ENCODE measurements at regions of chr2 and their contacts with region 1.

Region 1: GRCh38 chr2:230326453-230327417 is at the start of gene SP140L:
- DNase-seq: peak; percentile 86
- H3K4me3 Mint-ChIP-seq: peak within 1 kb of the TSS; percentile 89
- H3K27ac Mint-ChIP-seq: peak within 1 kb of the TSS; percentile 90
- H3K4me1 Mint-ChIP-seq: peaks cover 70% of the 10 kb centered on the region
- H3K27me3 Mint-ChIP-seq: no peaks in the 10 kb centered on the region
- total RNA-seq, gene SP140L: 85.2 to 88.0 TPM

Region 2: GRCh38 chr2:230219419-230220331 is 107.1 kb before region 1 on chr2 and contains the start of gene SP110:
- CTCF ChIA-PET with region 1: interaction called, 4 read pairs
- POLR2A ChIA-PET with region 1: interaction called, 49 read pairs
- DNase-seq: peak; percentile 88
- H3K4me3 Mint-ChIP-seq: peak within 1 kb of the TSS; percentile 94
- H3K27ac Mint-ChIP-seq: peak within 1 kb of the TSS; percentile 91
- H3K4me1 Mint-ChIP-seq: peaks cover 75% of the 10 kb centered on the region
- H3K27me3 Mint-ChIP-seq: no peaks in the 10 kb centered on the region
- total RNA-seq, gene SP110: 125 to 128 TPM

Region 3: GRCh38 chr2:230225486-230225885 is 101.2 kb before region 1 on chr2 and contains the start of gene SP140:
- CTCF ChIA-PET with region 1: interaction called, 5 read pairs
- POLR2A ChIA-PET with region 1: interaction called, 49 read pairs
- DNase-seq: peak; percentile 88
- H3K4me3 Mint-ChIP-seq: peak within 1 kb of the TSS; percentile 77
- H3K27ac Mint-ChIP-seq: peak within 1 kb of the TSS; percentile 94
- H3K4me1 Mint-ChIP-seq: peaks cover 64% of the 10 kb centered on the region
- H3K27me3 Mint-ChIP-seq: no peaks in the 10 kb centered on the region
- total RNA-seq, gene SP140: 132 to 137 TPM

Region 4: GRCh38 chr2:230347659-230348305 is 21.0 kb after region 1 on chr2:
- CTCF ChIA-PET with region 1: interaction called, 5 read pairs
- POLR2A ChIA-PET with region 1: interaction called, 35 read pairs
- DNase-seq: peak; percentile 63
- H3K4me3 Mint-ChIP-seq: peak overlapping the region; percentile 63
- H3K27ac Mint-ChIP-seq: peak overlapping the region; percentile 92
- H3K4me1 Mint-ChIP-seq: peaks cover 72% of the 10 kb centered on the region
- H3K27me3 Mint-ChIP-seq: no peaks in the 10 kb centered on the region

Region 5: DNA sequence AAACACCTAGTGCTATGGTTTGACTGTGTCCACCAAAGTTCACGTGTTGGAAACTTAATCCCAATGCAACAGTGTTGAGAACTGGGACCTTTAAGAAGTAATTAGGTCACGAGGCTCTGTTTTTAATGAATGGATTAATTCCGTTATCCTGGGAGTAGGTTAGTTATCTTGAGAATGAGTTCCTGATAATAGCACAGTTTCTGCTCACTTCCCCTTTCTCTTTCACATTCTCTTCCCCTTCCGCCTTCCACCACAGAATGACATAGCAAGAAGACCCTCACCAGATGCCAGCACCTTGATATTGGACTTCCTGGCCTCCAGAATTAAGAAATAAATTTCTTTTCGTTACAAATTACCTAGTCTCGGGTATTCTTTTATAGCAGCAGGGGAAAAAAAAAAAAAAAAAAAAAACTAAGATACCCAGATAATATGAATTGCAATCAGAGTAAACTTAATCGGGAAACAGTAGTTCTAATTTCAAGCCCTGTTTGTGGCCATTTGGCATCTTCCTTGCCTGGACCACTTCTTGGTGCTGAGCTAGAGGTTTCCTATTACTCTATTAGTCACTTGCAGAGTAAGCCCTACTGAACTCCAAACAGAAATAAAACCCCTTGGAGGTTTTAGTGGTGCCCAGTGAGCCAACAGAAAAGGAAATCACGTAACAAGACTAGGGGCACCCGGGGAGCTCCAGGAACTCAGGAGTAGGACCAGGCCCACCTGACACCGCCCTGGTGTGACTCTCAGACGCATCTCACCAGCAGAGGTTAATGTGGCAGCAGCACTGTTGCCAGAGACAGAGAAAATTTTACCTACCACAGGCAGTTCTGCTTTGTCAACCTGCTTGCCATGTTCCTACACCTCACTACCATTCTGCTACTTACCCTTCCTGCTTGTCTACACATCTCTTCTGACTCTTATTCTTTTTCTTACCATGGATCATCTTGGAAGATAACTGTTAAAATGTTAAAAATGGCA is 238.4 kb after region 1 on chr2:
- CTCF ChIA-PET with region 1: no interaction called
- POLR2A ChIA-PET with region 1: no interaction called
- DNase-seq: no peak
- H3K4me3 Mint-ChIP-seq: no peak overlapping the region
- H3K27ac Mint-ChIP-seq: no peak overlapping the region
- H3K4me1 Mint-ChIP-seq: peaks cover 5% of the 10 kb centered on the region
- H3K27me3 Mint-ChIP-seq: peaks cover 2% of the 10 kb centered on the region

Measured in activated CD4-positive, alpha-beta memory T cell treated with anti-CD3 and anti-CD28 coated beads, Interleukin-2, amount 10 ng/mL, durations not matched to agents 7 days and 5 days (primary cell).